ENCODE measurements at regions of chr3 and their contacts with region 1.

Region 1: DNA sequence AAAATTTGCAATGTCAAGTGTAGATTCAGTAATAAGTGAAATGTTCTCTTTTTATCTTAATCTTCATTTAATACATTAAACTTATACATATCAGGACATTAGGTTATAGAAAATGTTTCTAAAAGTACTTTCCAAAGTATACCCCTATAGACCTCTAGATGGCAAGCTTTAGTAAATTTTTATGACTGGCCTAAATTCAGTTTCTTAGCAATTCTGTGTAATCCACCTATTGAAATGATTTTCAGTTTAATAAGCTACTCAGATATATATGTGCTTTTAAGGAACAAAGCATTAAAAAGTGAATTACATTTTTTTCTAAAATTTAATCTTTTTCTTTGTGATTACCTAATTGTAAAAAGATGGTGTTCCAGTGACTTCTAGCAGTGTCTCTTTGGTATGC is 342.2 kb downstream of the GBE1 start:
- DNase-seq: no peak
- H3K4me3 Mint-ChIP-seq: no peak overlapping the region
- H3K27ac Mint-ChIP-seq: no peak overlapping the region
- H3K4me1 Mint-ChIP-seq: no peaks in the 10 kb centered on the region
- H3K27me3 Mint-ChIP-seq: no peaks in the 10 kb centered on the region
- CTCF ChIP-seq: no peak

Region 2: GRCh38 chr3:81490541-81491288 is 71.5 kb after region 1 on chr3:
- CTCF ChIA-PET with region 1: no interaction called
- intact Hi-C with region 1: loop called (anchors 5 kb)
- DNase-seq: peak; percentile 79
- H3K4me3 Mint-ChIP-seq: no peak overlapping the region
- H3K27ac Mint-ChIP-seq: no peak overlapping the region
- H3K4me1 Mint-ChIP-seq: no peaks in the 10 kb centered on the region
- H3K27me3 Mint-ChIP-seq: no peaks in the 10 kb centered on the region
- CTCF ChIP-seq: peak; percentile 49